ENCODE measurements at regions of chr2 and their contacts with region 1.

Region 1: GRCh38 chr2:216758256-216759155 is 63.2 kb upstream of the IGFBP5 start:
- DNase-seq: no peak
- H3K4me3 ChIP-seq: no peak overlapping the region
- H3K27ac ChIP-seq: no peak overlapping the region
- H3K4me1 ChIP-seq: no peaks in the 10 kb centered on the region
- H3K27me3 ChIP-seq: no peaks in the 10 kb centered on the region
- CTCF ChIP-seq: no peak

Region 2: GRCh38 chr2:216810399-216811160 is 52.1 kb after region 1 on chr2:
- CTCF ChIA-PET with region 1: no interaction called
- dilution Hi-C with region 1: loop called (anchors 5 kb)
- in situ Hi-C with region 1: no loop called
- intact Hi-C with region 1: no loop called
- DNase-seq: no peak
- H3K4me3 ChIP-seq: no peak overlapping the region
- H3K27ac ChIP-seq: no peak overlapping the region
- H3K4me1 ChIP-seq: no peaks in the 10 kb centered on the region
- H3K27me3 ChIP-seq: no peaks in the 10 kb centered on the region
- CTCF ChIP-seq: no peak